B cell (primary cell): ENCODE measurements at regions of chr7 and their contacts with region 1.

Region 1: GRCh38 chr7:157250605-157251228 is 86.1 kb upstream of the DNAJB6 start:
- DNase-seq: peak; percentile 67
- ATAC-seq: peak; percentile 56
- H3K4me3 ChIP-seq: no peak overlapping the region
- H3K4me3 Mint-ChIP-seq: no peak overlapping the region
- H3K27ac ChIP-seq: no peak overlapping the region
- H3K27ac Mint-ChIP-seq: no peak overlapping the region
- H3K4me1 ChIP-seq: no peaks in the 10 kb centered on the region
- H3K4me1 Mint-ChIP-seq: peaks cover 4% of the 10 kb centered on the region
- H3K27me3 ChIP-seq: no peaks in the 10 kb centered on the region
- H3K27me3 Mint-ChIP-seq: no peaks in the 10 kb centered on the region
- CTCF ChIP-seq: peak; percentile 90

Region 2: GRCh38 chr7:155815332-155816191 is 1435.2 kb before region 1 on chr7:
- CTCF ChIA-PET with region 1: no interaction called
- POLR2A ChIA-PET with region 1: no interaction called
- intact Hi-C with region 1: loop called (anchors 5 kb)
- DNase-seq: peak; percentile 55
- ATAC-seq: peak; percentile 65
- H3K4me3 ChIP-seq: no peak overlapping the region
- H3K4me3 Mint-ChIP-seq: peak overlapping the region; percentile 1
- H3K27ac ChIP-seq: no peak overlapping the region
- H3K27ac Mint-ChIP-seq: no peak overlapping the region
- H3K4me1 ChIP-seq: peaks cover 12 to 13% of the 10 kb centered on the region in 2 donors
- H3K4me1 Mint-ChIP-seq: peaks cover 19% of the 10 kb centered on the region
- H3K27me3 ChIP-seq: peaks cover 0 to 50% (median 21%) of the 10 kb centered on the region in 4 experiments
- H3K27me3 Mint-ChIP-seq: peaks cover 47% of the 10 kb centered on the region
- CTCF ChIP-seq: peak; percentile 20

Region 3: DNA sequence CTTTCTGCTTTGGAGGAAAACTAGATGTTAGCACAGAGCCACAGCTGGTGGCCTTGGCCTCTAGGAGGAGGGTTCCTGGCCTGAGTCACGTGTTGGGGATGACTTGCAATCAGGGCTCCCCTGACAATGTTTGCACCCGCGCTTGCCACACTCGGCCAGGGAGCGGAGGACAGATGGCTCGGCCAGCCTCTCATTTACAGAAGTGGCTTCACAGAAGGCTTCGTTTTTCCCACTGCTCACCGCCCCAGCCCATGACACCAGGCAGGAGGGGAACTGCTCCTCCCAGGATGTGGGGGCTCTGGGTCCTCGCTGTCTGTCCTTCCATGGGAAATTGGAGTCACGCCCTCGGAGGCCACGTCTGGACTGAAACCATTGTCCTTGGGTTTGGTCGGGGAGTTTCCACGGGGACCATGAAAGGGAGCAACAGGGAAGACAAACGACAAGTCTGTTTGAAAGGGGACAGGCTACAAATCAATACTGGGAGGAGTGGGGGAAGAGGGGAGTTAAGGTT is 161.6 kb before region 1 on chr7:
- CTCF ChIA-PET with region 1: no interaction called
- POLR2A ChIA-PET with region 1: no interaction called
- intact Hi-C with region 1: no loop called
- DNase-seq: no peak
- ATAC-seq: no peak
- H3K4me3 ChIP-seq: no peak overlapping the region
- H3K4me3 Mint-ChIP-seq: no peak overlapping the region
- H3K27ac ChIP-seq: no peak overlapping the region
- H3K27ac Mint-ChIP-seq: no peak overlapping the region
- H3K4me1 ChIP-seq: no peaks in the 10 kb centered on the region
- H3K4me1 Mint-ChIP-seq: no peaks in the 10 kb centered on the region
- H3K27me3 ChIP-seq: peaks cover 0 to 3% (median 0%) of the 10 kb centered on the region in 4 experiments
- H3K27me3 Mint-ChIP-seq: peaks cover 8% of the 10 kb centered on the region
- CTCF ChIP-seq: no peak